ENCODE measurements at regions of chrX and their contacts with region 1.

Region 1: DNA sequence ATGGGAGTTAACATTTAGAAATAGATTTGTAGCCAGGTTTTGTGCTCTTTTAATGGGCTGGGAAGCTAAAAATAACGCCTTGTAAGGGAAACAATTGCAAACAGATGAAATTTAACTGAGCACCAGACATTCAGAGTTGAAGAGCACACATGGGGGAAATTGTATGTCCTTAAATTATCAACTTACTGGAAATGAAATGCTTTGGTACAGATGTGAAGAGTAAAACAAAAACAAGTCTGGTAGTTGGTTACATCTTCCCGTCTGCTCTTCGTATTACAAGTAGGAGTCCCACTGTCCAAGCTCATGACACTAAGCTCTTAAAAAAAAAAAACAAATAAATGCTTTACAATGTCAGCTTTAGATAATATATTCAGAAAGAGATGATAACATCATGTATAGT is 59.5 kb upstream of the RPA4 start:
- DNase-seq: no peak
- ATAC-seq: no peak

Region 2: GRCh38 chrX:96884027-96884426 is 59.9 kb after region 1 on chrX:
- intact Hi-C with region 1: no loop called
- DNase-seq: no peak
- ATAC-seq: no peak

Region 3: GRCh38 chrX:96971812-96972211 is 147.6 kb after region 1 on chrX:
- intact Hi-C with region 1: loop called in 1 of 2 experiments (anchors 5 kb)
- DNase-seq: no peak
- ATAC-seq: no peak

Measured in left colon (tissue), 2 donors.